ENCODE measurements at regions of chr15 and their contacts with region 1.

Region 1: GRCh38 chr15:90419738-90420406 is 31.8 kb downstream of the IQGAP1 start:
- DNase-seq: peak; percentile 61
- ATAC-seq: peak; percentile 95
- H3K4me3 Mint-ChIP-seq: peak overlapping the region; percentile 47
- H3K27ac Mint-ChIP-seq: peak overlapping the region; percentile 93
- H3K4me1 Mint-ChIP-seq: peaks cover 80% of the 10 kb centered on the region
- H3K27me3 Mint-ChIP-seq: no peaks in the 10 kb centered on the region

Region 2: DNA sequence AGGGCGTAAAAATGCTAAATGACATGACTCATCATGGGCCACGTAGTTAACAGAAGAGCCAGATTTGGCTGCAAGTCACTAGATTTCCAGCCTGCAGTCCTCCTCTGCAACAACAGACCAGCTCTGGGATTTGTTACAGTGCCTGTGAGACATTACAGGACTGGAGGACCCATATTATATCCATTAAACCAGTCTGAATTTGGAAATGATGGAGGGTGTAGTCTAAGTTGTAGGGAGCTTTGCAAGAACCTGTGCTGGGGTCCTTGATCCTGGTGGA is 57.0 kb before region 1 on chr15:
- CTCF ChIA-PET with region 1: interaction called, 7 read pairs
- POLR2A ChIA-PET with region 1: no interaction called
- intact Hi-C with region 1: loop called (anchors 2 to 5 kb)
- DNase-seq: no peak
- ATAC-seq: no peak
- H3K4me3 Mint-ChIP-seq: no peak overlapping the region
- H3K27ac Mint-ChIP-seq: peak overlapping the region; percentile 5
- H3K4me1 Mint-ChIP-seq: peaks cover 25% of the 10 kb centered on the region
- H3K27me3 Mint-ChIP-seq: no peaks in the 10 kb centered on the region

Region 3: GRCh38 chr15:90400406-90401314 is 19.2 kb before region 1 on chr15:
- CTCF ChIA-PET with region 1: interaction called, 10 read pairs
- POLR2A ChIA-PET with region 1: no interaction called
- intact Hi-C with region 1: loop called (anchors 1 kb)
- DNase-seq: peak; percentile 73
- ATAC-seq: peak; percentile 99
- H3K4me3 Mint-ChIP-seq: peak overlapping the region; percentile 59
- H3K27ac Mint-ChIP-seq: peak overlapping the region; percentile 95
- H3K4me1 Mint-ChIP-seq: peaks cover 69% of the 10 kb centered on the region
- H3K27me3 Mint-ChIP-seq: no peaks in the 10 kb centered on the region

Region 4: DNA sequence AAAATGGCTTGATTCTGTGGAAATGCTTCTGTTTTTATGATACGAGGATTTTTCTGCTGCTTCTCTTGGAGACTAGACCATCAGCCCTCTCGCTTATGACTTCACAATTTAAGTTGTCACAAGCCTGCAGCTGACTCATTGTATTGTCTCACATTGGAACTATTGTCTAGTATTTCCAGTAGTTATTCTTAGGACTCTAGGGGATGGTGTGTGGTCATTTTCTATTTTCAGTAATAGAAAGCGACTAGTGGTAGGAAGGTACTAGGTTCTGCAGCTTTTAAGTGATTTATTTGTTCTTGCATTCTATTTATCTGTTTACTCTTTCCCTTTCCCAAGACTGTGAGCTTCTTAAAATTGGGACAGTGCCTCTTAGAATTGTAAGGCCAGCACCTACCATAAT is 43.5 kb after region 1 on chr15:
- CTCF ChIA-PET with region 1: interaction called, 4 read pairs
- POLR2A ChIA-PET with region 1: no interaction called
- intact Hi-C with region 1: loop called in 1 of 2 experiments (anchors 5 kb)
- DNase-seq: no peak
- ATAC-seq: no peak
- H3K4me3 Mint-ChIP-seq: no peak overlapping the region
- H3K27ac Mint-ChIP-seq: no peak overlapping the region
- H3K4me1 Mint-ChIP-seq: peaks cover 21% of the 10 kb centered on the region
- H3K27me3 Mint-ChIP-seq: no peaks in the 10 kb centered on the region

Region 5: DNA sequence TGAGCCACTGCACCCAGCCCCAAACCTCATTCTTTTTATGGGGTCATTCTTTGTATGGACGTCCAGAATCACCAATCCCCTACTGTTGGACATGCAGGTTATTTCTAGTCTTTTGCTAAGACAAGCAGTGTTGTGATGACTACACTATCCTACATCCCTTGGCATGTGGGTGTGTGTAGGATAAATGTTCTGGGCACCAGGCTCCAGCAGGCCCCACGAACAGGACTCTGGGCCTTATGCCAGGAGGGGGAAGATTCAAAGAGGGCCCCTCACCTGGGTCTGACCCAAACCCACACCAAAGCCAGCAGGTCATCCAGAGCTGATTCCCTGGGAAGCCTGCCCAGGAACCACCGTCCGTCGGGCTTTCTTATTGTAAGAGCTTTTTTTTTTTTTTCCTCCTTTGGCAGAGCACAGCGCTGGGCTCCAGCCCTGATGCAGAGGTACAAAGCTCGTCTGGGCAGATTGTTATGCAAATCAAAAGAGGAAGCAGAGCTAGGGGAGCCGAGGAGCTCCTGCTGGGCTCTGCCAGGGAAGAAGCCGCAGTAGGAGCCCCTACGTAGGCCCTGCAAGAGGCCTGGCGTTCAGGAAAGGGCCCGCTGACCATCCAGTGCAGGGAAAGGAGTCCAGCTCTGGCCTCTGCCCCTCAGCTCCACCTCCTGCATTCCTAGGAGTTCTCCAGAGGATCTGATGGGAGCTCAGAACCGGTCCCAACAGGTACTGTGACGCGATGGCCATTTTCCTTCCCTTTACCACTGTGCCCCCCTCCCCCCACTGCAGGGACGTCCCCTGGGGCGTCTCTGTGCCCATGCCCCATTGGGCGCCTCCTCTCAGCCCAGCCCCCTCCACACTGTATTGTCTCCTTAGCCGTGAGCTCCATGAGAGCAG is 419.6 kb after region 1 on chr15:
- CTCF ChIA-PET with region 1: no interaction called
- POLR2A ChIA-PET with region 1: no interaction called
- intact Hi-C with region 1: loop called in 1 of 2 experiments (anchors 1 kb)
- DNase-seq: peak; percentile 75
- ATAC-seq: peak; percentile 34
- H3K4me3 Mint-ChIP-seq: peak overlapping the region; percentile 80
- H3K27ac Mint-ChIP-seq: peak overlapping the region; percentile 92
- H3K4me1 Mint-ChIP-seq: peaks cover 63% of the 10 kb centered on the region
- H3K27me3 Mint-ChIP-seq: no peaks in the 10 kb centered on the region